ENCODE measurements at regions of chr11 and their contacts with region 1.

Region 1: GRCh38 chr11:66592457-66593302 is at the starts of genes CCDC87 and CCS:
- DNase-seq: peak; percentile 97
- ATAC-seq: peak; percentile 94
- H3K4me3 Mint-ChIP-seq: peak within 1 kb of the TSS; percentile 97
- H3K27ac Mint-ChIP-seq: peak within 1 kb of the TSS; percentile 99
- H3K4me1 Mint-ChIP-seq: peaks cover 11% of the 10 kb centered on the region
- H3K27me3 Mint-ChIP-seq: peaks cover 39% of the 10 kb centered on the region
- CTCF ChIP-seq: peak; percentile 32
- total RNA-seq, gene CCDC87: 0.71 to 0.85 TPM (median 0.80 TPM) in 3 replicates
- total RNA-seq, gene CCS: 35.9 to 47.3 TPM (median 41.7 TPM) in 3 replicates

Region 2: DNA sequence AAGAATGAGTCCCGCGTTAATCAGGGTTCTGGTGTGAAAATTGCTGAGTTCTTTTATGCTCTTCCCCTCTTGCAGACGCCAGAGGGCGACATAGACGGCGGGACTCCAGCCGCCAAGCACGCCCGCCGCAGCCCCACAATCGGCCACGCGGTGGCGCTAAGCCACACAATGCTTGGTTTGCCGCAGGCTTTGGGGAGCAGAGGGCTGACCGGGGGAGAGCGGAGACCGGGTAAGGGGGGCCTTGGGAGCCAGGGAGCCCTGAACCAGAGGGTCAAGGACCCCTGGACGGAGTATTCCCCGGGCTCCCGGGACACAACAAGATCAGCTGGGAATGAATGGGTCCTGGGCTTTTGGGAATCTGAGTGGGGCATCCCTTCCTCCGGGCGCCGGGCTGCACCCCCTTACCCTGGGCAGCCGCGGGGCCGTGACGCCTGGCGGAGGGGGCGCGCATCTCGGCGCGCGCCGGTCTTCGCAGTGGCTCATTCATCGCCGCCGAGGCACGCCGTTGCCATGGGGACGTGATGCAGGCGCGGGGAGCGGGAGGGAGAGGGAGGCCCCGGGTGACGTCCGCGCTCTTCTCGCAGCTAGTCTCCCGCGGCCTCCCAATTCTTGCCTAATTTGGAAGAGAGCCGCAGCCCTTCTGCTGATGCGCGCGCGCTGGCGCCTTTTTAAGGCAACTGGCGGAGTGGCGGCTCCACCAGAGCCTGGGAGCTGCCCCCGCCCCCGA is 184.0 kb before region 1 on chr11:
- CTCF ChIA-PET with region 1: no interaction called
- POLR2A ChIA-PET with region 1: no interaction called
- DNase-seq: peak; percentile 97
- ATAC-seq: peak; percentile 76
- H3K4me3 Mint-ChIP-seq: peak overlapping the region; percentile 66
- H3K27ac Mint-ChIP-seq: no peak overlapping the region
- H3K4me1 Mint-ChIP-seq: peaks cover 10% of the 10 kb centered on the region
- H3K27me3 Mint-ChIP-seq: peaks cover 34% of the 10 kb centered on the region
- CTCF ChIP-seq: peak; percentile 99

Region 3: GRCh38 chr11:66532784-66533183 is 59.9 kb before region 1 on chr11:
- CTCF ChIA-PET with region 1: no interaction called
- POLR2A ChIA-PET with region 1: no interaction called
- DNase-seq: no peak
- ATAC-seq: no peak
- H3K4me3 Mint-ChIP-seq: no peak overlapping the region
- H3K27ac Mint-ChIP-seq: no peak overlapping the region
- H3K4me1 Mint-ChIP-seq: peaks cover 3% of the 10 kb centered on the region
- H3K27me3 Mint-ChIP-seq: no peaks in the 10 kb centered on the region
- CTCF ChIP-seq: no peak

Region 4: GRCh38 chr11:66545701-66546367 is 46.8 kb before region 1 on chr11 and contains the start of gene ZDHHC24:
- CTCF ChIA-PET with region 1: interaction called, 16 read pairs
- POLR2A ChIA-PET with region 1: interaction called, 5 read pairs
- DNase-seq: peak; percentile 98
- ATAC-seq: peak; percentile 85
- H3K4me3 Mint-ChIP-seq: peak within 1 kb of the TSS; percentile 85
- H3K27ac Mint-ChIP-seq: peak within 1 kb of the TSS; percentile 93
- H3K4me1 Mint-ChIP-seq: peaks cover 38% of the 10 kb centered on the region
- H3K27me3 Mint-ChIP-seq: no peaks in the 10 kb centered on the region
- CTCF ChIP-seq: no peak
- total RNA-seq, gene ZDHHC24: 11.1 to 14.8 TPM (median 13.7 TPM) in 3 replicates

Region 5: DNA sequence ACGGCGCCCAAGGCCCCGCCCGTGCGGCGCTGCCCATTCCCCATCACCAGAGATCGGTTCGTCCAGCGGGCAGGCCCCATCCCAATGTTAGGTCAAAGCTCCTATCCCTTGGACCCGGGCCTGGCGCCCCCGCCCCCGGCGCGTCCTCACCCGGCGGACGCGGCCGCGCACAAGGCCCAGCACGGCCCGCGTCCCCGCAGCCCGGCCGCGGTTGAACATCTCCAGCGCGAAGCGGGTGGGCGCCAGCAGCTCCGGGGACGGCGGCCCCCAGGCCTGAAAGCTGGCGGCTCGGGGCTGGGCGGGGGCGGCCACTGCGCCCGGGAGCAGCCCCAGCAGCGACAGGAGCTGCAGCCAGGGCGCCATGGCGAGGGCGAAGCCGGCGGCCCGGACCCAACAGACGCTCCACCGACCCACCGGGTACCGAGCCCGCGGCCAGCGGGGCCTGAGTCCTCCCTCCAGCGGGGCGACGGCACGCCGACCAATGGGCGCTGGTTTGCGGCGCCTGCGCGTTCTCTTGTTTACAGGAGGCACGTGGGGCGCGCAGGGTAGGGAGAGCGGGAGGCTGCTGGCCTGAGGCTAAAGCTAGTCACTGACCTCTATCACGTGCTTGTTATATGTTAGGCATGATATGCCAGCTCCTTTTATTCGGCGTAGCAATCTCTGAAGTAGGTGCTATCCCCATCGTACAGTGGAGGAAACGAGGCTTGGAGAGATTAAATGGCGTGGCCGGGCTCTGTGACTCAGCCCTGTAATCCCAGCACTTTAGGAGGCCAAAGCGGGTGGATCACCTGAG is 24.4 kb before region 1 on chr11 and contains the start of gene CTSF:
- CTCF ChIA-PET with region 1: interaction called, 18 read pairs
- POLR2A ChIA-PET with region 1: no interaction called
- DNase-seq: peak; percentile 53
- ATAC-seq: no peak
- H3K4me3 Mint-ChIP-seq: peak within 1 kb of the TSS; percentile 16; the same call in 1 of the 2 replicates
- H3K27ac Mint-ChIP-seq: peak within 1 kb of the TSS; percentile 48; the same call in 1 of the 2 replicates
- H3K4me1 Mint-ChIP-seq: peaks cover 21% of the 10 kb centered on the region
- H3K27me3 Mint-ChIP-seq: peaks cover 15% of the 10 kb centered on the region
- CTCF ChIP-seq: no peak
- total RNA-seq, gene CTSF: 4.4 to 4.9 TPM (median 4.7 TPM) in 3 replicates

Region 6: GRCh38 chr11:66579017-66579606 is 13.6 kb before region 1 on chr11:
- CTCF ChIA-PET with region 1: interaction called, 18 read pairs
- POLR2A ChIA-PET with region 1: interaction called, 3 read pairs
- DNase-seq: peak; percentile 88
- ATAC-seq: peak; percentile 95
- H3K4me3 Mint-ChIP-seq: no peak overlapping the region
- H3K27ac Mint-ChIP-seq: no peak overlapping the region
- H3K4me1 Mint-ChIP-seq: peaks cover 3% of the 10 kb centered on the region; the same call in 1 of the 2 replicates
- H3K27me3 Mint-ChIP-seq: peaks cover 40% of the 10 kb centered on the region
- CTCF ChIP-seq: peak; percentile 82

Region 7: DNA sequence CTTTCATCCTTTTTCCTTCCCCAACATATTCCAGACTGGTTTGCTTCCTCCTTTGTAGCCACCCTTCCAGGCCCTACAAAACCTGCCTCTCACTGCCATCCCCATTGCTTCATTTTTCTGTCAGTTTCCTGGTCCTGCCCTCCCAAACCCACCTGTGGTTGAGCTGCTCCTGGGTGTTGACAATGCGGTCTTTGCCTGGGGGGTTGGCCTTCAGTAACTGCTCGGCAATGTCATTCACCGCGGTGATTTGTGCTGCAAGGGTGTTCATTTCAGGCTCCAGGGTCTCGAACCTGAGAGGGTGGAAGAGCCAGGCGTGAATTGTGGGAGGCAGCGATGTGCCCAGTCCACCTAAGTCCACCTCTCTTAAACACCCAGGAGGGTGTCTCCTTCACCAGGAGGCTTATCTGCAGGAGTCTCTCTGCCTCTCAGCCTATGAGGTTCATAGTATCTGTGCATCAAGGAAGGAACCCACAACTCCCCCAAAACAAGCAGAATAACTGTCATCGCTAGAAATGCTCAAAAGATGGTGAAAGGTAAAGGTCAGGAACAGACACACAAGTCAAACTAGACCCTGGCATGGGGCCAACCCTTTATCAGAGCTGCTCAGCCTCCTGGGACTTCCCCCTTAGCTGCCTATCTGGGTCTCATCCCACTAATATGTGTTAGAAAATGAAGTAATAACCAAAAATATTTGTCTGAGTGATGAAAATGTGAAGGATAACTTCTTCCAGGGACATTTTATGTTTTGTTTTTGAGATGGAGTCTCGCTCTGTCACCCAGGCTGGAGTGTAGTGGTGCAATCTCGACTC is 109.0 kb after region 1 on chr11:
- CTCF ChIA-PET with region 1: no interaction called
- POLR2A ChIA-PET with region 1: no interaction called
- DNase-seq: no peak
- ATAC-seq: no peak
- H3K4me3 Mint-ChIP-seq: no peak overlapping the region
- H3K27ac Mint-ChIP-seq: no peak overlapping the region
- H3K4me1 Mint-ChIP-seq: no peaks in the 10 kb centered on the region
- H3K27me3 Mint-ChIP-seq: no peaks in the 10 kb centered on the region
- CTCF ChIP-seq: no peak